AG04449 (cell line): ENCODE measurements at regions of chr22 and their contacts with region 1.

Region 1: DNA sequence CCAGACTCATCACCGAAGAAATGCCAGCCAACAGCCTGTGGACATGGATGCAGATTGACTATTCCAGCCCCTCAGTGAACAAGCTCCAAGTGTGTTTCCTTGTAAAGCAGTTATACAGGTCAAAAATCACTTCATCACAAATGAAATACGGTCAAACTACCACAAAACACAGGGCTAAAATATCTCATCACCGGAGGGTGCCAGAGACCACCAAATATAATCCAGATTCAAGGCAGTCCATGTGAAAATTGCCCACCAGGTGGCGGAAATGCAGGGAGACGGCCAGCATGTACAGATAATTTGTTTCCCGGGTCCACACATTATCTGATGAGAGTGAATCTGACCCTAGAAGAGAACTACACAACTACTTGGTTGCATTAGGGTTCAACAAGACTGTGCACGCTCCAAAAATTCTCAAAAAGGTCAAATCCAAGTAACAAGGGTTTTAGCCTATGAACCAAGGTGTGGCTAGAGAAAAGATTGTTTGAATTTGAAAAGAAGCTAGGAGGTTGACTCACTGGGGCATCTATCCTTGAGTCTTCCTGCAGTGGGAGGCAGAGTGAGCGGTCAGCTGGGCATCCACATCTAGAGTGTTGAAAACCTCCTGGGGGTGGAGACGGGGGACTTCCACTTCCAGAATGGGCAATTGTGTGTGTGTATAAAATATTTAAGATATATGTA is 71.7 kb downstream of the IGLL5 start:
- DNase-seq: peak; percentile 31
- H3K4me3 ChIP-seq: no peak overlapping the region
- CTCF ChIP-seq: peak; percentile 73

Region 2: GRCh38 chr22:22463855-22464540 is 495.3 kb before region 1 on chr22:
- CTCF ChIA-PET with region 1: interaction called, 58 read pairs
- POLR2A ChIA-PET with region 1: no interaction called
- DNase-seq: no peak
- H3K4me3 ChIP-seq: no peak overlapping the region
- CTCF ChIP-seq: peak; percentile 49

Region 3: DNA sequence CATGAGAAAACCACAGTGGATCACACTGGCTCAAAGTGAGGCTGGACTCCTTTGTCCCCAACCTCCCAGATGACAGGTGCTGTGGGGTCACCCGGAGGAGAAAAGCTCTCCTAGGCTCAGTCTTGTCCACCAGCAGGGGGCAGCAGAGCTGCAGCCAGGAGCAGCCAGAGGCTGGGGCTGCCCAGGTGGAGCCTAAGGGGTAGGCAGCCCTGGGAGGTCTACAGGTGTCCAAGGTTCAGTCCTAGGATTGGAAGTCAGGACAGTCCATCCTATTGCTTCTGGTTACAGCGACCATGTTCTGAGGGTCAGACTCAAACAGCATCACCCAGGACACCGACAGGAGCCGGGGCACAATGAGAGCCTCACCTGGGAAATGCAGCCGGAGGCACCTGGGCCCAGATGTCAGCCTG is 149.3 kb before region 1 on chr22:
- CTCF ChIA-PET with region 1: interaction called, 49 read pairs
- POLR2A ChIA-PET with region 1: no interaction called
- DNase-seq: no peak
- H3K4me3 ChIP-seq: no peak overlapping the region
- CTCF ChIP-seq: peak; percentile 81

Region 4: DNA sequence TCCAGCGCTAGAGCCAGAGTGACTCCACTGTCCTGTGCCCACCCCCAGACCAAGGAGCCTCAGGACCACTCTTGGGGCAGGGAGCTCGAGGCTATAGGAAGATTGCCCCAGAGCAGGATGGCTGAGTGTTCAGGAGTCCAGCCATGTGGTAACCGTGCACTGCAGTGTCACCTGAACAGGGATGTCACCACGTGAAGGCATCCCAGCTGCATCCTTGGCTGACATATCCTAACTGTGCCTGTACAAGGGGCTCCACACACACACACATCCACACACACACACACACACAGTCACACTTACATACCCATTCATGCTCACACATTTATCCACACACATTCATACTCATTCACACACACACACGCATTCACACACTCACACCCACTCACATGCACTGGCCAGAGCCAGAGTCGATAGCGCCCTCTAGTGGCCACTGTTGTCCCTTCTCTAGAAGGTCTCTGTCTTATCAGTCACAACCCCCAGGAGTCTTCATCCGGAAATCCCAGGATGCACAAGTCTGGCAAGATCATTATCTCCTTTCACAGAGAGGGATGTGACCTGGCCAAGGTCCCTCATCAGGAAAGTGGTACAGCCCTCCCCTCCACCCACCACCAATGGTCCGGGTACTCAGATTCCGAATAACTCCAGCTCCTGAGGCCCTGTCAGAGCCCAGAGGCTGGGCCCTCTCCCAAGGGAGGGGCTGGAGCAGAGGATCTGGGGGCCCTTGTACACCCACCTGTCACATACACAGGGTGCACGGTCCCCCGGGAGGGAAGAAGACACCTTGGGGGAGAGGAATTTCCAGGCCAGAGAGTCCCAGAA is 16.6 kb before region 1 on chr22:
- CTCF ChIA-PET with region 1: interaction called, 33 read pairs
- POLR2A ChIA-PET with region 1: no interaction called
- DNase-seq: no peak
- H3K4me3 ChIP-seq: no peak overlapping the region
- CTCF ChIP-seq: peak; percentile 70

Region 5: GRCh38 chr22:23070418-23071229 is 111.3 kb after region 1 on chr22 and contains the start of gene GNAZ:
- CTCF ChIA-PET with region 1: interaction called, 10 read pairs
- POLR2A ChIA-PET with region 1: no interaction called
- DNase-seq: no peak
- H3K4me3 ChIP-seq: peak within 1 kb of the TSS; percentile 70
- CTCF ChIP-seq: no peak

Region 6: GRCh38 chr22:23144932-23145873 is 185.9 kb after region 1 on chr22 and contains the start of gene RAB36:
- CTCF ChIA-PET with region 1: interaction called, 800 read pairs
- POLR2A ChIA-PET with region 1: no interaction called
- DNase-seq: peak; percentile 72
- H3K4me3 ChIP-seq: peak within 1 kb of the TSS; percentile 68
- CTCF ChIP-seq: no peak